HCT116 (cell line): ENCODE measurements at regions of chr15 and their contacts with region 1.

Region 1: DNA sequence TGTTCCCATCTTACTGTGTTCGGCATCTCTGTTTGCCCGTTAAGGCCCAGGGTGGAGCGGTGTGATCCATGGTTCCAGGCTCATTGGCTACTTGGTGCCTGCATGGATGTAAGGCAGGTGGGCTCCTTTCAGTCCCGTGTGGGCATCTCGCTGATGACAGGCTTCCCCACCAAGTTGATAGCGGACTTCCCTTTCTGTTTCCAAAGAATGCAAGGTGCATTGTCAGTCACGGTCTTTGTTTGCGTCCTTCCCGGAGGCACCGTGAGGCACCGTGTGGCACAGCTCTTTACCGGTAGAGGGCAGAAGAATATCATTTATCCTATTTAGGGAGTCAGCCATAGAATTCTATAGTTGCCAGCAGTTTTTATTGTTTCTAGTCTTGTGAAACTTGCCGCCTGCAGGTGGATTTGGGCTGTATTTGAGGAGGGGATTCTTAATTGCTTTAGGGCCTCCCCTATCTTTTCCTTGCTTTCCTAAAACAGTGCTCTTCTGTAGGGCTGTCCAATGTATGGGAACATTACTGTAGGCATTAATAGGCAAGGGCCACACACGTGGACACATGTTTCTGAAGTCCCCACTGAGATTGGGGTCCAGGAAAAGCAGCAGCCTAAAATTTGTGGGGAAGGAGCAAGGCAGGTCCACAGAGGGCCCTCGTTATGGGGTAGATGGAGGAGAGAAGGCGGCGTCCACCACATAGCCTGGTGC is 244.1 kb downstream of the SLCO3A1 start:
- DNase-seq: peak; percentile 16
- ATAC-seq: peak; percentile 94
- H3K4me3 ChIP-seq: no peak overlapping the region
- H3K27ac ChIP-seq: no peak overlapping the region
- H3K4me1 ChIP-seq: no peaks in the 10 kb centered on the region
- H3K27me3 ChIP-seq: no peaks in the 10 kb centered on the region
- CTCF ChIP-seq: peak; percentile 71 to 82 (median 74); a peak in 5 of 6 replicates
- POLR2A ChIP-seq: no peak
- RAD21 ChIP-seq: peak; percentile 85

Region 2: GRCh38 chr15:92205255-92205739 is 107.7 kb after region 1 on chr15:
- CTCF ChIA-PET with region 1: no interaction called
- POLR2A ChIA-PET with region 1: no interaction called
- RAD21 ChIA-PET with region 1: no interaction called
- intact Hi-C with region 1: loop called (anchors 5 kb)
- DNase-seq: no peak
- ATAC-seq: peak; percentile 34; the same call in 1 of the 2 replicates
- H3K4me3 ChIP-seq: no peak overlapping the region
- H3K27ac ChIP-seq: no peak overlapping the region
- H3K4me1 ChIP-seq: no peaks in the 10 kb centered on the region
- H3K27me3 ChIP-seq: no peaks in the 10 kb centered on the region; the same call in 1 of the 2 replicates
- CTCF ChIP-seq: 0 out of 6 replicates have a peak, but pooled peaks of 1 of the 3 experiments have one; percentile 16
- POLR2A ChIP-seq: no peak
- RAD21 ChIP-seq: peak; percentile 39

Region 3: GRCh38 chr15:92226014-92226612 is 128.5 kb after region 1 on chr15:
- CTCF ChIA-PET with region 1: interaction called, 4 read pairs
- POLR2A ChIA-PET with region 1: no interaction called
- RAD21 ChIA-PET with region 1: no interaction called
- intact Hi-C with region 1: loop called (anchors 1 kb)
- DNase-seq: peak; percentile 16
- ATAC-seq: peak; percentile 83
- H3K4me3 ChIP-seq: no peak overlapping the region
- H3K27ac ChIP-seq: no peak overlapping the region
- H3K4me1 ChIP-seq: no peaks in the 10 kb centered on the region
- H3K27me3 ChIP-seq: no peaks in the 10 kb centered on the region; the same call in 1 of the 2 replicates
- CTCF ChIP-seq: peak; percentile 38 to 58 (median 51); a peak in 5 of 6 replicates
- POLR2A ChIP-seq: no peak
- RAD21 ChIP-seq: peak; percentile 60

Region 4: GRCh38 chr15:92277776-92278175 is 180.2 kb after region 1 on chr15:
- CTCF ChIA-PET with region 1: no interaction called
- POLR2A ChIA-PET with region 1: no interaction called
- RAD21 ChIA-PET with region 1: no interaction called
- intact Hi-C with region 1: loop called (anchors 2 kb)
- DNase-seq: peak; percentile 12
- ATAC-seq: peak; percentile 91
- H3K4me3 ChIP-seq: no peak overlapping the region
- H3K27ac ChIP-seq: no peak overlapping the region
- H3K4me1 ChIP-seq: no peaks in the 10 kb centered on the region
- H3K27me3 ChIP-seq: peaks cover 39% of the 10 kb centered on the region; the same call in 1 of the 2 replicates
- CTCF ChIP-seq: peak; percentile 26 to 47 (median 43); a peak in 4 of 6 replicates
- POLR2A ChIP-seq: no peak
- RAD21 ChIP-seq: peak; percentile 28; the same call in 1 of the 2 replicates

Region 5: GRCh38 chr15:92306663-92307062 is 209.0 kb after region 1 on chr15:
- CTCF ChIA-PET with region 1: no interaction called
- POLR2A ChIA-PET with region 1: no interaction called
- RAD21 ChIA-PET with region 1: no interaction called
- intact Hi-C with region 1: loop called (anchors 1 kb)
- DNase-seq: peak; percentile 24
- ATAC-seq: peak; percentile 74
- H3K4me3 ChIP-seq: no peak overlapping the region
- H3K27ac ChIP-seq: no peak overlapping the region
- H3K4me1 ChIP-seq: no peaks in the 10 kb centered on the region; a peak in 1 of 4 replicates
- H3K27me3 ChIP-seq: peaks cover 50% of the 10 kb centered on the region
- CTCF ChIP-seq: peak; percentile 3 to 42 (median 40); a peak in 4 of 6 replicates
- POLR2A ChIP-seq: no peak
- RAD21 ChIP-seq: no peak

Region 6: DNA sequence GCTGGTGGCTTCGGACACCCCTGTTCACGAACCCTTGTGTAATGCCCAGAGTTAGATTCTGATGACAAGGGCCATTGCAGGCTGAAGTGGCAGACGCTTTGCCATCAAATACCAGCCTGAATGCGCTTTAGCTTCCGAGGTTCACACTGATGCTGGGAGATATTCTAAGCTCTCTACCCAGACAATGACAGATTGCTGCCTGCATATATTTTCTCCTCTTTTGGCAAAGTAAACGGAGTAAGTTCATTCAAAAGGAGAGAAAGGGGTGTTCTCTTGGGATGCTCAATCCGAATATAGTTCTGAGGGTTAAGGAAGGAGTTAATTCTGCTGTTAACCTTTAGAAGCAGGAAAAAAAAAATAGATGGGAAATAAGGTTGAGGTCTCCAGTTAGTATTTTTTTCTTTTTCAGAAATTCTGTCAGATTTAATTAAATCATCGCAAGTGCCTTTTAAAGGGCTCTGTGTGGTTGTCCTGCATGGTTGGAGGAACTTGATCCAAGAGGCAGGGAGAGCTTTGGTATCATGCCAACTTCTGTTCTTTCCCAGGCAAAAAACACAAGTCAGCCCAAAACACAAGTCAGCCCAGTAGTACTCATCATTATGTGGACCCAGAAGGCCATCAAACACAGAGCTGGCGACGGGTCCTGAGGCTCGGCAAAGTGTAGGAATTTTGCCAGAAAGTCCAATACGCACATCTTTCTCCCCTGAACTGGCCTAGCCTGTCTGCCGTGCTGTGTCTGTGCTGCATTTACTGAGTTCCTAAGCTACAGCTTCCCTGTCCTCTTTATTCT is 225.1 kb after region 1 on chr15:
- CTCF ChIA-PET with region 1: no interaction called
- POLR2A ChIA-PET with region 1: no interaction called
- RAD21 ChIA-PET with region 1: no interaction called
- intact Hi-C with region 1: no loop called
- DNase-seq: no peak
- ATAC-seq: no peak
- H3K4me3 ChIP-seq: no peak overlapping the region
- H3K27ac ChIP-seq: no peak overlapping the region
- H3K4me1 ChIP-seq: no peaks in the 10 kb centered on the region
- H3K27me3 ChIP-seq: peaks cover 55% of the 10 kb centered on the region
- CTCF ChIP-seq: no peak
- POLR2A ChIP-seq: no peak
- RAD21 ChIP-seq: no peak

Region 7: DNA sequence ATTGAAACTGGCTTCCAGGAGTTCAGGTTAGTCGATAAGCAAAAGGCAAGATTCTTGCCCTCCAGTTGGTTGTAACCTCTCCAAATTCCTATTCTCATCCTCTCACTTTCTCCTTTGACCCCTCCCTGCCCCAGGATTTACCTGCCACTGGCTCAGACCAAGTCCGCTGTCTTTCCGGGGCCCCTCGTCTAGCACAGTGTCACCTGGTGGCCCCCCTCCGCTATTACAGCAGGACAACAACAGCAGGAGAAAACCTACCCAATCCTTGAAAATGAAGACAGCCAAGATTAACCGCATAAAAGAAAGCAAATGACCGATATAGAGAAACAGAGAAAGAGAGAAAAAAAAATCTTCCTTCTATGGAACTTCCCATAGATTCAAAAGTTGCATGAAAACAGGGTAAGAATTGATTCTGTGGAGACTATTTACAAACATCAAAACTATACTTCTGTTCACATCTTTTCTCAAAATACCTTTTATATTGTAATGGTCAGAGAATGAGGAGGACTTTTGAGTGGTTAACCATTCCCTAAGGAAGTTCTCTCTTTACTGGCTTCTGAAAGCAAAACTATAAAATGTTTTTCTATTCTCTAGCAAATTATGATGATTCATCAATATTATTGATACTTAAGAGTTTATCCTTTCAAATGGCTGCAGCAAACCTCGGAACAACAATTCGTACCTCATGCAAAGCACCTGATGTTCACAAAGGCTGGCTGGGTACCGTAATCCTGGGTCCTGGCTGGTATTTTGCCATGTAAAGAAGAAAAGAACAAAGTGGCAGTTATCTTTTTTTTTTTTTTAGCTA is 286.1 kb after region 1 on chr15:
- CTCF ChIA-PET with region 1: interaction called, 12 read pairs
- POLR2A ChIA-PET with region 1: no interaction called
- RAD21 ChIA-PET with region 1: no interaction called
- intact Hi-C with region 1: loop called (anchors 1 kb)
- DNase-seq: peak; percentile 26
- ATAC-seq: peak; percentile 94
- H3K4me3 ChIP-seq: no peak overlapping the region
- H3K27ac ChIP-seq: no peak overlapping the region
- H3K4me1 ChIP-seq: no peaks in the 10 kb centered on the region
- H3K27me3 ChIP-seq: peaks cover 36% of the 10 kb centered on the region; the same call in 1 of the 2 replicates
- CTCF ChIP-seq: peak; percentile 60 to 96 (median 93); a peak in 5 of 6 replicates
- POLR2A ChIP-seq: no peak
- RAD21 ChIP-seq: peak; percentile 57

Region 8: DNA sequence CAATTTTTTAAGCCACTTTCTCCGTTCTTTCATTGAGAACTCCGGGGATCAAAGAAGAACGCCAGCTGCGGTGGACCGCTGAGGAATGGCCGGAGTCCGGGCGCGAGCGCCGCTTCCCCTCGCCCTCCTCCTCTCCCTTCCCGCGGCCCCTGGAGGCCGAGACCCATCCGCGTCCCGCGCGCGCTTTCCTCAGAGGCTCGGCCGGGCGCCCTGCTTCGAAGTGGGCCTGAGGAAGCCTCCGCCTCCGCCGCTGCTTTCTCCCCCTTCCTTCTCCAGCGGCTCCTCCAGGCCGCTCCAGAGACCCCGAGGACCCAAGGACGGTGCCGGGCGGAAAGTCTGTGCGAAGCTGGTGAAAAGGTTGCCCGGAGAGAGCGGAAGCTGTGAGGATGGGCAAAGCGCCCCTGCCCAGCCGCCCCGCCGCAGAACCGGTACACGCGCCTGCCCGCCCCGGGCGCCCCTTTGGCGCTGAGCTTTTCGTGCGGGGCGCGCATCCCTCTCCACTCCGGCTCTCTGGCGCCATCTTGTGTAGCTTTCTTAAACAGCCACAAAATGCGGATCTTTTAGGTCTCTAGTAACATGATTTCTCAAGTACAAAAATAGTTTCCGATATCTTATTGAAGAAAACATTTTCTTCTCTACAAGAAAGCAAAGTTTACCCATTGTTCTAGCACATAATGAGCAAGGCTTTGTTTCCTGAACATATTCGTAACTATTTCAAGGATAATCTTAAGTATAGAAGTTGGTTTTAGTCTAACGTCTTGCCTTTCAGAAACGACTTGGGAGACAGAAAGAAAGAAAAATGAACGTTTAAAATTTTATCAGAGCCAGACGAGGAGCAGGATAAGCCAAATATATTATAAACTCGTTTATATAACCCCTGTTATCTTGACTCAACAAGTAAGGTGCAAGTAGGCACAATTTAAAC is 617.1 kb after region 1 on chr15:
- CTCF ChIA-PET with region 1: interaction called, 7 read pairs
- POLR2A ChIA-PET with region 1: no interaction called
- RAD21 ChIA-PET with region 1: no interaction called
- intact Hi-C with region 1: loop called (anchors 2 kb)
- DNase-seq: peak; percentile 33
- ATAC-seq: peak; percentile 94
- H3K4me3 ChIP-seq: peak overlapping the region in 1 of 2 experiments; percentile 0; a peak in 1 of 4 replicates
- H3K27ac ChIP-seq: no peak overlapping the region
- H3K4me1 ChIP-seq: 0 out of 4 replicates have a peak, but pooled peaks cover 0 to 3% of the 10 kb centered on the region in 2 experiments
- H3K27me3 ChIP-seq: no peaks in the 10 kb centered on the region
- CTCF ChIP-seq: peak; percentile 82 to 93 (median 83)
- POLR2A ChIP-seq: no peak
- RAD21 ChIP-seq: peak; percentile 89